ENCODE measurements at regions of chr3 and their contacts with region 1.

Region 1: GRCh38 chr3:123723522-123724168 is 138.8 kb upstream of the HACD2 start:
- DNase-seq: peak; percentile 46 to 56
- H3K4me3 ChIP-seq: no peak overlapping the region
- H3K27ac ChIP-seq: no peak overlapping the region
- H3K4me1 ChIP-seq: no peaks in the 10 kb centered on the region
- H3K27me3 ChIP-seq: no peaks in the 10 kb centered on the region
- CTCF ChIP-seq: peak; percentile 86

Region 2: GRCh38 chr3:123342643-123343080 is 381.0 kb before region 1 on chr3:
- CTCF ChIA-PET with region 1: interaction called, 15 read pairs
- POLR2A ChIA-PET with region 1: no interaction called
- intact Hi-C with region 1: no loop called
- DNase-seq: no peak
- H3K4me3 ChIP-seq: no peak overlapping the region
- H3K27ac ChIP-seq: no peak overlapping the region
- H3K4me1 ChIP-seq: no peaks in the 10 kb centered on the region
- H3K27me3 ChIP-seq: no peaks in the 10 kb centered on the region
- CTCF ChIP-seq: no peak

Region 3: DNA sequence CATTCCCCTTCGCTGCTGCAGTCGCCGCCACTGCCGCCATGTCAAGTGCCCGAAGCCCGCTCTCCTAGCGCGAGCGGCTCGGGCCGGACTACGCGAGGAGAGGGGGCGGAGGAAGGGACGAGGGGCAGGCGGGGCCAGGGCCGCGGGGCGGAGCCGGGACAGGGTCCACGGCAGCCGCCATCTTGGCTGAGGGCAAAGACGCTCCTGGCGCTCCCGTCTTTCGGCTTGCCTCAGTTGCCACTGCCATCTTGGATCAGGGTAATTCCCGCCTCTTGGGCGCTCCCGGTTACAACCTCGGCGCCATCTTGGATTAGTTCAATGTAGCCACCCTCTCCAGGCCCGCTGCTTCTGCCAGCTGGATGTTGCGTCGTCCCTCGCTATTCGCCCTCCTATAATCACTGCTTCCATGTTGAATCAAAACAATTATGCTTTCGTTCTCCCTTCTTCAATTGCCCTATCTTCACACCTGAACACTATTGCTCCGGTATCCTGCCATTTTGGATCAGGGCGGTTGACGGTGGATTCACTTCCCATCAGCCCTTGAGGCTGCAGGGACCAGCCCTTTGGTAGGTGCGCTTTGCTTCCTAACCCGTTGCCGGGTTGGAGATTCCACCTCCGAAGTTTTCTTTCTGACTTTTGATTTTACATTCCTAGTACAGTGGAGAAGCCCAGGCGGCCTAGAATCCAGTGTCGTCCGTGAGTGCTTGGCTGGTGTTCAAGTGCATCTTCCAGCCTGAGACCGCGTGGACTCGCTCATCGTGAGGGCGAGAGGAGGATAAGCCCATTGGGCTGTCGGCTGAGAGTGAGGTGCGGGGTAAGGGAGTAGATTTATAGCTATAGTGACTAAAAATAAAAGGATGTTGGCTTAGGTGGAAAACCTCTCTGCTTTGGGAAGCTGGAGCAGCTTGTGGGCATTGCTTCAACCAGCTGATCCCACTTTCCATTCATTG is 138.4 kb before region 1 on chr3 and contains the start of gene HACD2:
- CTCF ChIA-PET with region 1: no interaction called
- POLR2A ChIA-PET with region 1: no interaction called
- intact Hi-C with region 1: loop called (anchors 2 kb)
- DNase-seq: peak; percentile 89 to 98
- H3K4me3 ChIP-seq: peak within 1 kb of the TSS; percentile 72
- H3K27ac ChIP-seq: peak within 1 kb of the TSS; percentile 95
- H3K4me1 ChIP-seq: peaks cover 45% of the 10 kb centered on the region
- H3K27me3 ChIP-seq: no peaks in the 10 kb centered on the region
- CTCF ChIP-seq: no peak
- total RNA-seq, gene HACD2: 38.4 and 53.3 TPM in 2 replicates

Region 4: DNA sequence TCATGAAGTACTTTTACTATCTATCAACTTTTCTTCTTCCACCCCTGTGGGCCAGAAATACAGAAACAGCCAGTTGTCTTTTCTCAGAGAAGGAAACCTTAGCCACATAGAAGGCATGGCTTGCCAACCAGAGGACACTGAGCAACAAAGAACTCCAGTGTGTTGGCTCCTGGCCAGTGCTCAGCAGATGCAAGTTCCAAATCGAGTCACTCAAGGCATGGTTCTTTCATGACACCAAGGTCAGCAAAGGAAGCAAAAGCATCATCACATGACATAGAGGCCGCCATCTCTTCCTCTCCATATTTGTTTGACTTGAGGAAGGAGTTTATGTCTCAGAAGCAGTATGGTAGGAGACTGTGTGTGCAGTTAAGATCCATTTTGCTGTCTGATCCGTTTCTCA is 68.3 kb after region 1 on chr3:
- CTCF ChIA-PET with region 1: no interaction called
- POLR2A ChIA-PET with region 1: interaction called, 3 read pairs
- intact Hi-C with region 1: loop called (anchors 5 kb)
- DNase-seq: no peak
- H3K4me3 ChIP-seq: no peak overlapping the region
- H3K27ac ChIP-seq: peak overlapping the region; percentile 62
- H3K4me1 ChIP-seq: peaks cover 24% of the 10 kb centered on the region
- H3K27me3 ChIP-seq: no peaks in the 10 kb centered on the region
- CTCF ChIP-seq: no peak

Region 5: DNA sequence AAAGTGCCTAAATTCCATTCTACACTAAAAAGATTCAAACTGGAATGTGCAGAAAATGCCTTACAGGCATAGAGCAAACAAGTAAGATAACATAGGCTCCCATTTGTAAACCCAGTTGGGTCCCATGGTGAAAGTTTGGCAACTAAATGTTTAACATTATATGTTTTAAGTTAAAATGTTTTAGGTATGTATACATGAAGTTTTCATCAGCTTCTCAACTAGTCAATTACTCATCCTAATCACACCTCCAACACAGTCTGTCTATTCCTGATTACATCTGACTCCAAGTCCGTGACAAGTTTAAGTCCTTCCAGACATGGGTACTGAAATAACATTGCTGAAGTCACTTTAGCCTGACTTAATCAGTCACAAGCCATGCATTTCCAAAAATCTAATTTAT is 135.5 kb after region 1 on chr3:
- CTCF ChIA-PET with region 1: interaction called, 12 read pairs
- POLR2A ChIA-PET with region 1: no interaction called
- intact Hi-C with region 1: no loop called
- DNase-seq: no peak
- H3K4me3 ChIP-seq: no peak overlapping the region
- H3K27ac ChIP-seq: no peak overlapping the region
- H3K4me1 ChIP-seq: no peaks in the 10 kb centered on the region
- H3K27me3 ChIP-seq: no peaks in the 10 kb centered on the region
- CTCF ChIP-seq: no peak

Region 6: GRCh38 chr3:123971406-123971805 is 247.8 kb after region 1 on chr3:
- CTCF ChIA-PET with region 1: interaction called, 11 read pairs
- POLR2A ChIA-PET with region 1: no interaction called
- intact Hi-C with region 1: no loop called
- DNase-seq: no peak
- H3K4me3 ChIP-seq: no peak overlapping the region
- H3K27ac ChIP-seq: no peak overlapping the region
- H3K4me1 ChIP-seq: no peaks in the 10 kb centered on the region
- H3K27me3 ChIP-seq: peaks cover 45% of the 10 kb centered on the region
- CTCF ChIP-seq: no peak

Region 7: DNA sequence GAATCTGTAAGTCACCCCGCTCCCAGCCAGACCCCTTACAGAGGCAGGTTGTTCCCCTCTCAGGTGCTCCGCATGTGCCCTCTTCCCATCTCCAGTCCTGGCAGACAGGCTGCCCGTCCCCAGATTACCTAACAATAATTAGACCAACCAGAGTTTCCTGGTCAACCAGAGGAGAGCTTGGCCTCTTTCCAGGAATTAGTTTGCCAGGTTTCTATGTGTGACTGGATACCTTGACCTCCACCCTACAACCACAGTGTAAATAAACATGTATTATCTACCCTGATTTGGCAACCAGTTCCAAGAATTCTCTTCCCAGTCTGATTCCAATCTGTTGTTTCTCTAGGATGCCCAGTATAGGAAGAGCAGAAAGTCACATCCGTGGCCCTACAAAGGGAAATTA is 828.6 kb after region 1 on chr3:
- CTCF ChIA-PET with region 1: no interaction called
- POLR2A ChIA-PET with region 1: no interaction called
- intact Hi-C with region 1: loop called (anchors 5 kb)
- DNase-seq: peak; percentile 78 to 85
- H3K4me3 ChIP-seq: no peak overlapping the region
- H3K27ac ChIP-seq: no peak overlapping the region
- H3K4me1 ChIP-seq: peaks cover 14% of the 10 kb centered on the region; the same call in 1 of the 2 replicates
- H3K27me3 ChIP-seq: peaks cover 41% of the 10 kb centered on the region
- CTCF ChIP-seq: no peak

Measured in PC-9 (cell line).